Naive thymus-derived CD4-positive, alpha-beta T cell (primary cell): ENCODE measurements at regions of chr5 and their contacts with region 1.

Region 1: DNA sequence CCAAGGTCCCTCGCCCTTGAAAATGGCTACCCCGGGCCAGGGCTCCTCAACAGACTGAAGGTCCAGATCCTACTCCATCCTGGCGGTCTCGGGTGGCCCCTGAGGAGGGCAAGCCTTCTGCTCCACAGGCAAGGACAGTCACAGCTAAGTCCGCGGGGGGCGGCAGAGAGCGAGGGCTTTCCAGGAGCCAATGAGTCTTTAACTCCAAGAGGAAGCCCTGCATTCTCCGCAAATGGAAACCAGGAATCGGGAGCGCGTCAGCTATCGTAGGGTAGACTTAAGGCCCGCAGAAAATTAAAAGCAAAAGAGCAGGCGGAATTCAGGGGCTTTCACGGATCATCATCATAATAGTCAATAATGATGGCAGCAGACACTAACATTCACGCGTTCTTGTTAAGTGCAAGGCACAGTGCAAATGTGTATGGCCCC is 87.8 kb upstream of the TNFAIP8 start:
- DNase-seq: peak; percentile 66 to 91 (median 75)
- ATAC-seq: peak; percentile 89
- H3K4me3 ChIP-seq: peak overlapping the region; percentile 96
- H3K4me3 Mint-ChIP-seq: peak overlapping the region; percentile 95 to 100 (median 98)
- H3K27ac ChIP-seq: peak overlapping the region; percentile 85
- H3K27ac Mint-ChIP-seq: peak overlapping the region; percentile 87 to 99 (median 96)
- H3K4me1 ChIP-seq: peaks cover 24 to 32% of the 10 kb centered on the region in 2 donors
- H3K4me1 Mint-ChIP-seq: peaks cover 47 to 74% (median 72%) of the 10 kb centered on the region in 7 donors
- H3K27me3 ChIP-seq: no peaks in the 10 kb centered on the region
- H3K27me3 Mint-ChIP-seq: no peaks in the 10 kb centered on the region

Region 2: GRCh38 chr5:118336468-118336867 is 931.5 kb before region 1 on chr5:
- CTCF ChIA-PET with region 1: no interaction called
- POLR2A ChIA-PET with region 1: no interaction called
- intact Hi-C with region 1: no loop called
- DNase-seq: no peak
- ATAC-seq: no peak
- H3K4me3 ChIP-seq: no peak overlapping the region
- H3K4me3 Mint-ChIP-seq: no peak overlapping the region
- H3K27ac ChIP-seq: no peak overlapping the region
- H3K27ac Mint-ChIP-seq: no peak overlapping the region
- H3K4me1 ChIP-seq: no peaks in the 10 kb centered on the region
- H3K4me1 Mint-ChIP-seq: no peaks in the 10 kb centered on the region
- H3K27me3 ChIP-seq: no peaks in the 10 kb centered on the region
- H3K27me3 Mint-ChIP-seq: no peaks in the 10 kb centered on the region

Region 3: DNA sequence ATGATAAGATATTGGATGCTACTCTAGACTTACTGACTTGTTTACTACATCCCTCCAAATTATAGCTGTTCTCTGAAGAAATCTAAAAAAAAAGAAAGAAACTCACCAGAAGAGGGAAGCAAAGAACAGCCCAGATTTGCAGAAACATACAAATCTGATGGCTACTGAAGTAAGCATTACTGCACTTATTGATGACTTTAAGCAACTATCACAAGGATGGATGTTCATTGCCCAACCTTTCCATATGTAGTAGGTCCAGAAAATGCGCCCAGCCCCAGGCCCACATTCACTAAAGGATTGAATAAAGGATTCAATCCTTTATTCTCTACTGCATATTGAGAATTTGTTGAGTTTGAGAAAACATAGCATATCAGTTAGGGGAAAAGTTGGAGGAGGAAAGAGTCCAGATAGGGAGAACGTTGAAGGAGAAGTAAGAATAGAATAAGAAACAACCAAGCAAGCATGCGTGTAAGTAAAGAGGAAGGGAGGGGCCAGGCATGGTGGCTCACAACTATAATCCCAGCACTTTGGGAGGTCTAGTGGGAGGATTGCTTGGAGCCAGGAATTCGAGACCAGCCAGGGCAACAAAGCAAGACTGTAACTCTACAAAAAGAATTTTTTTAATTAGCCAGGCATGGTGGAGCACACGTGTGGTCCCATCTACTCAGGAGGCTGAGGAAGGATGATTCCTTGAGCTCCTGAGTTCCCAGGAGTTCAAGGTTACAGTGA is 245.8 kb before region 1 on chr5:
- CTCF ChIA-PET with region 1: interaction called, 3 read pairs
- POLR2A ChIA-PET with region 1: no interaction called
- intact Hi-C with region 1: loop called (anchors 2 to 5 kb)
- DNase-seq: peak in 6 of 9 donors; percentile 12 to 60 (median 54)
- ATAC-seq: peak; percentile 67
- H3K4me3 ChIP-seq: no peak overlapping the region
- H3K4me3 Mint-ChIP-seq: no peak overlapping the region
- H3K27ac ChIP-seq: no peak overlapping the region
- H3K27ac Mint-ChIP-seq: peak overlapping the region in 3 of 9 donors; percentile 46 to 60 (median 47)
- H3K4me1 ChIP-seq: no peaks in the 10 kb centered on the region
- H3K4me1 Mint-ChIP-seq: peaks cover 0 to 6% (median 2%) of the 10 kb centered on the region in 7 donors
- H3K27me3 ChIP-seq: no peaks in the 10 kb centered on the region
- H3K27me3 Mint-ChIP-seq: no peaks in the 10 kb centered on the region

Region 4: GRCh38 chr5:119290161-119290569 is 22.2 kb after region 1 on chr5:
- CTCF ChIA-PET with region 1: interaction called, 4 read pairs
- POLR2A ChIA-PET with region 1: interaction called, 227 read pairs
- intact Hi-C with region 1: loop called (anchors 1 kb)
- DNase-seq: peak in 1 of 9 donors; percentile 39
- ATAC-seq: peak; percentile 62
- H3K4me3 ChIP-seq: peak overlapping the region; percentile 47
- H3K4me3 Mint-ChIP-seq: peak overlapping the region; percentile 63 to 97 (median 82)
- H3K27ac ChIP-seq: peak overlapping the region; percentile 82
- H3K27ac Mint-ChIP-seq: peak overlapping the region; percentile 87 to 100 (median 96)
- H3K4me1 ChIP-seq: peaks cover 65% of the 10 kb centered on the region in 2 donors
- H3K4me1 Mint-ChIP-seq: peaks cover 67 to 95% (median 84%) of the 10 kb centered on the region in 7 donors
- H3K27me3 ChIP-seq: no peaks in the 10 kb centered on the region
- H3K27me3 Mint-ChIP-seq: no peaks in the 10 kb centered on the region

Region 5: DNA sequence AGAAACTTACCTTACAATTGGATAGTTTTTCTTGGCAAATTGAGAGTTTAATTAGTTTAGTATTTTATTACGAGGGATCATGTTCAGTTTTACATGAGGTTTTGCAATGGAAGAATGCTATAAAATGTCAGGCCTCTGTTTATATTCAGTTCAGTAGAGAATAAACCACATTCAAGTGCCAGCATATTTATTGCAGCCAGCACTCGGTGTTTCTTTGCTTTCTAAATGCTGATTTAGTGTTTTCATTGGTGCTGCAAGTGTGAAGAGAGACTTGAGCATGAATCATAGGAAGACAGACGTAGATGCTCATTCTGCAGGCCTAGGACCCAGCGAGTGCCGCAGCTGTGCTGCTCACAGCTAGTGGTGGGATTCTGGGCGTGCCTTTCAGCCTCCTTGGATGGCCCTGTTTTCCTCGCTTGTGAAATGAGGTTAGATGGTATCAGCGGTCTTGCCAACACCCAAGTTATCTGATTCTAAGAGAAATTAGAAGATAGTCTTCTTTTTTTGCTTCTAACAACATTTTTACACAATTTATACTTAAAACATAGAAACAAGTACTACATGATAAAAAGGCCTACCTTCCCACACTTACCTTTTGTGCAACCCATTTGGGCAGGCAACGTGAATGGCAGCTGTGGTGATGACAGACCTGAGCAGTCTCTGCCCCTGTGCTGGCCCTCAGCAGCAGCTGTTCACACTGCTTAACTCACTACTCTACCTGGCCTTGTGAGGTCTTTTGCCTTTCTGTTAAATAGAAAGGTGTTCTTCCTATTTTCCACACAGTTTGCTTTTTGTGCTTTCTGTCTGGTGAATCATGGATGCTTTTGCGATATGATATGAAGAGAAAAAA is 61.0 kb after region 1 on chr5:
- CTCF ChIA-PET with region 1: no interaction called
- POLR2A ChIA-PET with region 1: interaction called, 58 read pairs
- intact Hi-C with region 1: loop called in 1 of 2 experiments (anchors 2 kb)
- DNase-seq: peak in 4 of 9 donors; percentile 30 to 71 (median 37)
- ATAC-seq: peak; percentile 59
- H3K4me3 ChIP-seq: peak overlapping the region; percentile 40
- H3K4me3 Mint-ChIP-seq: peak overlapping the region; percentile 73 to 97 (median 81)
- H3K27ac ChIP-seq: peak overlapping the region; percentile 78
- H3K27ac Mint-ChIP-seq: peak overlapping the region; percentile 84 to 99 (median 95)
- H3K4me1 ChIP-seq: peaks cover 72 to 86% of the 10 kb centered on the region in 2 donors
- H3K4me1 Mint-ChIP-seq: peaks cover 63 to 98% (median 90%) of the 10 kb centered on the region in 7 donors
- H3K27me3 ChIP-seq: no peaks in the 10 kb centered on the region
- H3K27me3 Mint-ChIP-seq: no peaks in the 10 kb centered on the region

Region 6: DNA sequence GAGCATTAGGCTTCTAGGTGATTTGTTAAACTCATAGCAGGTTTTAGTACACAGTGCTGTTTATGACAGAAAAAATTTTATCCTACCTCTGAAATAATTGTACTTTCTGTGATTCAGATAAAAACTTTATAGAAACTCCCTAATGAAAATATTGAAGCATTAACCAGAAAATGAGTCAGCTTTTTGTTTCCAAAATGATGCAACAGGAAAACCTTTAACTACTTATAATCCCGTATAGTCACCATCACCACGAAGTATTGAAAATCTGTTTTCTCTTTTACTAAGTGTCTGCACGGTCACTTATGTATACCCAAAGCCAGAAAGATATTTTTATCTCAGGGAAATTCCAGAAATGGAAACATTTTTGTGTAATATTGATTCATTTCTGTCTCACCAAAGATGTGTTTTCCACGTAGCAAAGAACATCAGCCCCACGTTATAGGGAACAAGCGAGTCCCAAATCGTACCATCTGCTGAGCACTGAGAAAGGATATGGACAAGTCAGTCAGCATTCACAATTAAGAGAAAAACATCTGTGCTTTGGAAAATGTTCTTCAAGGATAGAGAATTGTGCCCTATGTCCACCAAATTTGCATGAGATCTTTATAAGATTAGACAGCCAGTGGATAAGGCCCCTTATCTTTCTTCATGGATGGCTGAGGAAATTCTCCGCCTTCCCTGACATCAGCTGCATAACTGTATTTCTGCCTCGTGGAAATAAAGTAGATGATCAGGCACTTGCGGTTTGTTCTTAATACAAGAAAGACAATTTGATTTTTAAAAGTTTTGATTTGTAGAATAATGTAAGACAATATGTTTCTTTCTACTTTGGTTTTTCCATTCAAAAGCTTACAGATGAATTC is 129.8 kb after region 1 on chr5:
- CTCF ChIA-PET with region 1: no interaction called
- POLR2A ChIA-PET with region 1: interaction called, 3 read pairs
- intact Hi-C with region 1: loop called (anchors 5 kb)
- DNase-seq: no peak
- ATAC-seq: peak; percentile 62
- H3K4me3 ChIP-seq: no peak overlapping the region
- H3K4me3 Mint-ChIP-seq: peak overlapping the region in 3 of 10 donors; percentile 1 to 37 (median 1)
- H3K27ac ChIP-seq: peak overlapping the region; percentile 25
- H3K27ac Mint-ChIP-seq: peak overlapping the region in 8 of 9 donors; percentile 8 to 82 (median 54)
- H3K4me1 ChIP-seq: no peaks in the 10 kb centered on the region
- H3K4me1 Mint-ChIP-seq: peaks cover 22 to 56% (median 53%) of the 10 kb centered on the region in 7 donors
- H3K27me3 ChIP-seq: no peaks in the 10 kb centered on the region
- H3K27me3 Mint-ChIP-seq: no peaks in the 10 kb centered on the region